Psoas muscle (tissue), 8 donors: ENCODE measurements at regions of chr4 and their contacts with region 1.

Region 1: DNA sequence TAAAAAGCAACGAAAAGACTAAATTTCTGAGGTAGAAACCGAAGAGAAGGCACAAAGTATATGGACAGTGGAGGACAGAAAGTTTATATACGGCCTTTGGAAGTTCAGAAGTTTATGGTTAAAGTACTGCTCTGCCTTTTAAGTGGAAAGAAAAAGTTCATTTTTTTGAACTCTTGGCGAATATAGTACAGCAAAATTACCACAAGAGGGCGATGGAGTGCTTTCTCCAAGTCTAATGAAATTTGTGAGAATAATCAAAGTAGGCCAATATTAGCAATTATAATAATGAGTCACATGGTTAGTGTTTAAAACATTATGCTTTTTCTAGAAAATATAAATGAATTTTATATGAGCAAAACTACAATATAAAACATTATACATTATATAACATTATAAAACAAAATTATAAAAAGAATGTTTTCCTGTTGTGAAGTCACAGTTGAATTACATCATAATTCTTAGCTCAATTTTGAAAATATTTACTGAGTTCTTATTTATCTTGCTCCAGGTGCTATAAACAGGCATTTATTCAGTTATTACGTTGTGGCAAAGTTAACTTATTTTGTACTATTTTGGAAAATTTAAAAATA is 136.2 kb upstream of the BMPR1B start:
- DNase-seq: no peak
- ATAC-seq: peak in 2 of 4 donors; percentile 46 to 74
- H3K4me3 ChIP-seq: no peak overlapping the region
- H3K27ac ChIP-seq: no peak overlapping the region
- H3K4me1 ChIP-seq: no peaks in the 10 kb centered on the region
- H3K27me3 ChIP-seq: no peaks in the 10 kb centered on the region
- CTCF ChIP-seq: peak; percentile 86

Region 2: GRCh38 chr4:94728056-94728766 is 106.6 kb after region 1 on chr4:
- intact Hi-C with region 1: loop called in 1 of 2 experiments (anchors 2 kb)
- DNase-seq: no peak
- ATAC-seq: no peak
- H3K4me3 ChIP-seq: no peak overlapping the region
- H3K27ac ChIP-seq: no peak overlapping the region
- H3K4me1 ChIP-seq: no peaks in the 10 kb centered on the region
- H3K27me3 ChIP-seq: no peaks in the 10 kb centered on the region
- CTCF ChIP-seq: no peak

Region 3: DNA sequence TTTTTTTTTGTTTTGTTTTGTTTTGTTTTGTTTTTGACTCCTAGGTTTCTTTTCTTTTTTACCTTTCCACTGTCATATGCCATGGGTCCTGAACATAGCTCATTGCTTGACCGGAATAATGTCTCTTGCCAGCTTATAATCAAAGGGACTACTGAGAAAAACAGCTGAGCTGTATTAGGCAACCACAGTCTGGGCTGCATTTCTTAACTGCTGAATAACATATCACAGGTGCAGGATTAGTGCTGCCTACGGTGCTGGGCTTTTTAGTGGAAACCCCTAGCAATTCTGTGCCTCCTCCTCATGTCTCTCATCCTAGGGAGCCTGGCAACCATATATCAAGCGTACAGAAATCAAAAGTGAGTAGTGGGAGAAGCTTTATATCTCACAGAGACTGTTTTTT is 469.7 kb after region 1 on chr4:
- intact Hi-C with region 1: loop called (anchors 5 kb)
- DNase-seq: no peak
- ATAC-seq: peak; percentile 86 to 95 (median 93)
- H3K4me3 ChIP-seq: peak overlapping the region; percentile 8
- H3K27ac ChIP-seq: no peak overlapping the region
- H3K4me1 ChIP-seq: peaks cover 12% of the 10 kb centered on the region
- H3K27me3 ChIP-seq: no peaks in the 10 kb centered on the region
- CTCF ChIP-seq: no peak